HepG2 (cell line): ENCODE measurements at regions of chrX and their contacts with region 1.

Region 1: DNA sequence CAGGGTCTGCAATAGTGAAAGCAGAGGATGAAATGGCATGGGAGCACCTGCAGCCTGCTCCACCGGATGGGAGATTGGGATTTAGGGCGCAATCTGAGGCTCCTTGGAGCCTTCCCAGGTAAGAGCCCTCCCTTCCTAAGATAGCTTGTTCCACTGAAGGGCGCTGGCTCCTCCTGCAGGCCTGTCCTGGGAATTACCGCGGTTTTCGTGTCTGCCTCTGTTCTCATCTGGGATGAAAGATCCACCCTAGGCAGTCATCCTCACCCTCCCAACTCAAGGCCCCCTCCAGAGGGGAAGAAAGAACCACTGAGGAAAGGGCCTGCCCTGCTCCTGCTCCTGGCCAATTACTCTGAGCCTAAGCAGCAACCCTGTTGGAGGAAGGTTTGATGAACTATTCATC is 547.5 kb downstream of the SMARCA1 start:
- DNase-seq: peak; percentile 23
- ATAC-seq: peak; percentile 94
- H3K4me3 ChIP-seq: no peak overlapping the region
- H3K27ac ChIP-seq: no peak overlapping the region
- H3K4me1 ChIP-seq: peaks cover 20% of the 10 kb centered on the region
- H3K27me3 ChIP-seq: no peaks in the 10 kb centered on the region
- CTCF ChIP-seq: peak; percentile 83
- EP300 ChIP-seq: no peak
- POLR2A ChIP-seq: no peak
- RAD21 ChIP-seq: peak; percentile 49; the same call in 1 of the 2 replicates

Region 2: GRCh38 chrX:128460834-128461233 is 514.9 kb before region 1 on chrX:
- CTCF ChIA-PET with region 1: no interaction called
- POLR2A ChIA-PET with region 1: no interaction called
- in situ Hi-C with region 1: no loop called
- intact Hi-C with region 1: loop called (anchors 2 kb)
- DNase-seq: no peak
- ATAC-seq: peak; percentile 45; the same call in 1 of the 3 replicates
- H3K4me3 ChIP-seq: no peak overlapping the region
- H3K27ac ChIP-seq: no peak overlapping the region
- H3K4me1 ChIP-seq: peaks cover 9% of the 10 kb centered on the region
- H3K27me3 ChIP-seq: no peaks in the 10 kb centered on the region; a peak in 1 of 5 replicates
- CTCF ChIP-seq: no peak; the same call in 1 of the 2 replicates
- EP300 ChIP-seq: no peak
- POLR2A ChIP-seq: no peak
- RAD21 ChIP-seq: no peak

Region 3: DNA sequence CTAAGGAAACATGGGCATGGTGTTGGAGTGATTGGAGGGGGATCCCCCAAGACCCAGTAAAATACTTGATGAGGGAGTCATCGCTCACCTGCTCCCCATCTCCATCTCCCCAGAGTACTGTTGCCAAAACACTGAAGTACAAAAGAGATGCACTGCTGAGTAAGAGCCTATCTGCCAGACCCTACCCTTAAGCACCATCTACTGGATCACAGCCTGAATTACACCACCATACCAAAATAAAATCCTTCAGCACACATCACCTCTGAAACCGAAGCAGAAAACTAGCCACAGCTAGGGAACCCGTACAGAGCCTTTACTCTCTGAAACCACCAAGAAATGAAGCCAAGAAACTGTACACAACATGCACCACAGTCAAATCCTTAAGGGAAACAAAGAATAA is 457.2 kb before region 1 on chrX:
- CTCF ChIA-PET with region 1: no interaction called
- POLR2A ChIA-PET with region 1: no interaction called
- in situ Hi-C with region 1: no loop called
- intact Hi-C with region 1: loop called (anchors 5 kb)
- DNase-seq: peak; percentile 6
- ATAC-seq: peak; percentile 84
- H3K4me3 ChIP-seq: no peak overlapping the region
- H3K27ac ChIP-seq: no peak overlapping the region
- H3K4me1 ChIP-seq: no peaks in the 10 kb centered on the region
- H3K27me3 ChIP-seq: no peaks in the 10 kb centered on the region
- CTCF ChIP-seq: peak; percentile 61
- EP300 ChIP-seq: no peak
- POLR2A ChIP-seq: no peak
- RAD21 ChIP-seq: no peak

Region 4: DNA sequence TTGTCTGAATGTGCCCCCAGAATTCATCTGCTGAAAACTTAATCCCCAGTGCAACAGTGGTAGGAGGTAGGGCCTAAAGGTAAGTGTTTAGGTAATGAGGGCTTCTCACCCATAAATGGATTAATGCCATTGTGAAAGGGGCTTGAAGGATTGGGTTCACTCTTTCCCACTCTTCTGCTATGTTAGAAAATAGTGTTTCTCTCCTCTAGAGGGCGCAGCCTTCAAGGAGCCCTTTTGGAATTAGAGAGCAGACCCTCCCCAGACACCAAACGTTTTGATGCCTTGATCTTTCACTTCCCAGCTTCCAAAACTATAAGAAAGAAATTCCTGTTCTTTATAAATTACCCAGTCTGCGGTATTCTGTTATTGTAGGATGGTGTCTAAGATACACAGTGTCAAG is 158.8 kb before region 1 on chrX:
- CTCF ChIA-PET with region 1: no interaction called
- POLR2A ChIA-PET with region 1: no interaction called
- in situ Hi-C with region 1: no loop called
- intact Hi-C with region 1: loop called (anchors 10 kb)
- DNase-seq: peak; percentile 22
- ATAC-seq: peak; percentile 46; the same call in 1 of the 3 replicates
- H3K4me3 ChIP-seq: no peak overlapping the region
- H3K27ac ChIP-seq: no peak overlapping the region
- H3K4me1 ChIP-seq: no peaks in the 10 kb centered on the region; the same call in 1 of the 2 replicates
- H3K27me3 ChIP-seq: no peaks in the 10 kb centered on the region
- CTCF ChIP-seq: peak; percentile 42
- EP300 ChIP-seq: no peak
- POLR2A ChIP-seq: no peak
- RAD21 ChIP-seq: no peak